ENCODE measurements at regions of chr7 and their contacts with region 1.

Region 1: DNA sequence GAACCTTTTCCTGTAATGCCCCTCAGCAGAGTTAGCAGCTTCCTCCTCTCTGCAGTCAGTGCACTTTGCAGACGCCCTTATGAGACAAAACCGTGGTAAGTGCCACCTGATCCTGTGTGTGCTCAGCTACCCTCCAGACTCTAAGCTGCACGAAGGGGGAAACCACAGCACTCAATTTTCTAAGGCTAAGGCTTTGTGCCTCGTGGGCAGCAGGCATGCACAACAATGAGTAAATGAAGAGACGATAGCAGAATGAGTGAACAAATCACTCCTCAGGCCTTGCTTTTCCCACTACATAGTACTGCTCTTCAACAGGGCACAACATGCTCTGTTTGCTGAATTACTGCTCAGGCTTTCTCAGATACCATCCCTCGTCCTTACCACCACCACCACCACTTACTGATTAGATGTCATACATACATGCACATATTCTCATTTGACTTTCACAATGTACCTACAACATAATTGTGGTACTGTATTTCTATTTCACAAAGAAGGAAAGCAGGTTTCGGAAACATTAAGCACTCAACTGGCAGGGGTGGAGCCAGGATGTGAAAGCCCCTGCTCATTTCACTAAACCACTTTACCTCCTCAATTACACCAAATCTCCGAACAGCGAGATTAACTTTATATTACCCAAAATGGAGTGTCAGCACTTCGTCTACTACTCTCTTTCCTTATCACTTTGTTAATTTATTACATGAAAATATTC is 85.4 kb downstream of the ICA1 start:
- DNase-seq: peak; percentile 96
- ATAC-seq: peak; percentile 82
- H3K4me3 ChIP-seq: peak overlapping the region; percentile 8
- H3K27ac ChIP-seq: peak overlapping the region; percentile 98
- H3K4me1 ChIP-seq: peaks cover 39% of the 10 kb centered on the region
- H3K27me3 ChIP-seq: no peaks in the 10 kb centered on the region
- CTCF ChIP-seq: no peak
- EP300 ChIP-seq: peak; percentile 22 to 52; a peak in 2 of 4 replicates
- POLR2A ChIP-seq: peak; percentile 62
- RAD21 ChIP-seq: 0 out of 2 replicates have a peak, but pooled peaks have one; percentile 3

Region 2: DNA sequence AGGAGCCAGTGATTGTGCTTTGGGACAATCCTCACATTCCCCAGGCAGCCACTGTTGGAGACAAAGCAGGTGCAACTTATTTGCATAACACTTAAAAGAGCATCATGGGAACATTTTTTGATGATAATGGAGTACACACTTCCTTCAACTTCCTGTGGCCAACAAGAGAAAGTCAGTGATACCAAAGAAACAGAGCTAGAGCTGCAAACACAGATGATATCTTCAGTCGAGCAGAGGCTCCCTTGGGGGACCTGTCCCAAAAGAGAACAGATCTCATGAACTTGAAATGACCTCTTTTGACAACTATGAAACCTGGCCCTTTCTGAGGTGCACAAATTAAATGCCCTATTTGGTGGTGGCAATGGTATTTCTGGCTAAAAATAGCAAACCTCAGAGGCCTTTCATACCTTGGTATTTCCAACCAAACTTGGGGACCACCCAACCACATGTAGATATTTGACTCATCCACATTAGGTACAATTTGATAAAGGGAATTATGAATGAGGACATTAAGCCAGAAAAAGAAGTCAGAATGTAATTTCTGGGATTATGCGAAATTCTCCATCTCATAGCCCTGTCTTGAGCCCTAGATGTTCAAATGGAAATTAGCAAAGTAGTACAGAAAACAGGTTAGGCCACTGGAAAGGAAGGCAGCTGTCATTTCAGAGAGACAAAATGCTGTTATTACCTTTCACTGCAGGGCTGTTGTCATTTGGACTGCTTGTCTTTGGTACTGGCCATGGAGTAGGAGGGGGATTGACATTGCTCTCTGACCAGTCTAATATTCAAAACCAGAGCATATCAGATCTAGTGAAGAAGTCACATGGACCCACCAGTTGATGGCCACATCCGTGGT is 60.8 kb before region 1 on chr7:
- CTCF ChIA-PET with region 1: interaction called, 3 read pairs
- POLR2A ChIA-PET with region 1: interaction called, 6 read pairs
- RAD21 ChIA-PET with region 1: interaction called, 26 read pairs
- SMC1A ChIA-PET with region 1: interaction called, 5 read pairs
- in situ Hi-C with region 1: no loop called
- intact Hi-C with region 1: loop called (anchors 1 kb)
- DNase-seq: peak; percentile 98
- ATAC-seq: peak; percentile 85
- H3K4me3 ChIP-seq: no peak overlapping the region
- H3K27ac ChIP-seq: peak overlapping the region; percentile 56
- H3K4me1 ChIP-seq: peaks cover 43% of the 10 kb centered on the region
- H3K27me3 ChIP-seq: no peaks in the 10 kb centered on the region
- CTCF ChIP-seq: no peak
- EP300 ChIP-seq: peak; percentile 77 to 93; a peak in 2 of 4 replicates
- POLR2A ChIP-seq: no peak
- RAD21 ChIP-seq: peak; percentile 30; the same call in 1 of the 2 replicates

Region 3: DNA sequence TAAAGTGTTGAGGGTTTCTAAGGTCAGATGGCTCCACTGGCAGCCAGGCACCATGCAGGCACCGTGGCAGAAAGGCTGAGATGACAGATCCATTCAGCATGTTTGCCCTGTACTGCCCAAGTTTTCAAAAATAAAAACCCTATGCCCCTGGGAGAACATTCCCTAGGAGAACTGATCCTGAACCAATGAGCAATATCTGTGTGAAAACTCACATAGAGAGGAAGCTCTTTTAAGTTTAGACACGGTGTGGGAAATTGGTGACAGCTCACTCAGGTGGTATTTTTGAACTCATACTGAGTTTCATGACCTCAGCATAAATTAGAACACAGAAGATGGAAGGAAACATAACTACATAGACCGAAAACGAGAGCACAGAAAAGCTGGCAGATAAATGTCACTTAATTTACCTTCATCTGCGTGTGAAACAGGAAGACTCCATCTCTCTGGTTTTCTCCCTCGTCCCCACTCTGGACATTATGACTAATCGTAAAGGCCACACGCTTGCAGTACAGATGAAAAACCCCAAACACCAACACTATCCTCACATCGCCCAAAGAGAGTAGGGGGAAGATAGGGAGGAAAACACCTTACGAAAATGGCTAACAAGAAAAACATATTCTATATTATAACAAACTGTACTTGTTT is 42.3 kb before region 1 on chr7:
- CTCF ChIA-PET with region 1: interaction called, 3 read pairs
- POLR2A ChIA-PET with region 1: interaction called, 8 read pairs
- RAD21 ChIA-PET with region 1: no interaction called
- SMC1A ChIA-PET with region 1: interaction called, 14 read pairs
- in situ Hi-C with region 1: no loop called
- intact Hi-C with region 1: loop called (anchors 1 kb)
- DNase-seq: peak; percentile 99
- ATAC-seq: peak; percentile 73
- H3K4me3 ChIP-seq: no peak overlapping the region
- H3K27ac ChIP-seq: peak overlapping the region; percentile 94
- H3K4me1 ChIP-seq: peaks cover 54% of the 10 kb centered on the region
- H3K27me3 ChIP-seq: no peaks in the 10 kb centered on the region
- CTCF ChIP-seq: no peak
- EP300 ChIP-seq: peak; percentile 81 to 92
- POLR2A ChIP-seq: no peak
- RAD21 ChIP-seq: peak; percentile 39; the same call in 1 of the 2 replicates

Region 4: GRCh38 chr7:8149222-8149621 is 27.3 kb before region 1 on chr7:
- CTCF ChIA-PET with region 1: no interaction called
- POLR2A ChIA-PET with region 1: no interaction called
- RAD21 ChIA-PET with region 1: interaction called, 17 read pairs
- SMC1A ChIA-PET with region 1: interaction called, 16 read pairs
- in situ Hi-C with region 1: no loop called
- intact Hi-C with region 1: no loop called
- DNase-seq: no peak
- ATAC-seq: peak; percentile 79
- H3K4me3 ChIP-seq: no peak overlapping the region
- H3K27ac ChIP-seq: peak overlapping the region; percentile 16
- H3K4me1 ChIP-seq: peaks cover 8% of the 10 kb centered on the region; the same call in 1 of the 2 replicates
- H3K27me3 ChIP-seq: no peaks in the 10 kb centered on the region
- CTCF ChIP-seq: no peak
- EP300 ChIP-seq: no peak
- POLR2A ChIP-seq: no peak
- RAD21 ChIP-seq: no peak

Region 5: GRCh38 chr7:8365503-8366110 is 189.1 kb after region 1 on chr7:
- CTCF ChIA-PET with region 1: no interaction called
- POLR2A ChIA-PET with region 1: no interaction called
- RAD21 ChIA-PET with region 1: no interaction called
- SMC1A ChIA-PET with region 1: no interaction called
- in situ Hi-C with region 1: no loop called
- intact Hi-C with region 1: no loop called
- DNase-seq: no peak
- ATAC-seq: peak; percentile 82
- H3K4me3 ChIP-seq: no peak overlapping the region
- H3K27ac ChIP-seq: no peak overlapping the region
- H3K4me1 ChIP-seq: no peaks in the 10 kb centered on the region
- H3K27me3 ChIP-seq: no peaks in the 10 kb centered on the region
- CTCF ChIP-seq: peak; percentile 46 to 49 (median 47); a peak in 5 of 6 replicates
- EP300 ChIP-seq: no peak
- POLR2A ChIP-seq: no peak
- RAD21 ChIP-seq: peak; percentile 50